ENCODE measurements at regions of chr11 and their contacts with region 1.

Region 1: DNA sequence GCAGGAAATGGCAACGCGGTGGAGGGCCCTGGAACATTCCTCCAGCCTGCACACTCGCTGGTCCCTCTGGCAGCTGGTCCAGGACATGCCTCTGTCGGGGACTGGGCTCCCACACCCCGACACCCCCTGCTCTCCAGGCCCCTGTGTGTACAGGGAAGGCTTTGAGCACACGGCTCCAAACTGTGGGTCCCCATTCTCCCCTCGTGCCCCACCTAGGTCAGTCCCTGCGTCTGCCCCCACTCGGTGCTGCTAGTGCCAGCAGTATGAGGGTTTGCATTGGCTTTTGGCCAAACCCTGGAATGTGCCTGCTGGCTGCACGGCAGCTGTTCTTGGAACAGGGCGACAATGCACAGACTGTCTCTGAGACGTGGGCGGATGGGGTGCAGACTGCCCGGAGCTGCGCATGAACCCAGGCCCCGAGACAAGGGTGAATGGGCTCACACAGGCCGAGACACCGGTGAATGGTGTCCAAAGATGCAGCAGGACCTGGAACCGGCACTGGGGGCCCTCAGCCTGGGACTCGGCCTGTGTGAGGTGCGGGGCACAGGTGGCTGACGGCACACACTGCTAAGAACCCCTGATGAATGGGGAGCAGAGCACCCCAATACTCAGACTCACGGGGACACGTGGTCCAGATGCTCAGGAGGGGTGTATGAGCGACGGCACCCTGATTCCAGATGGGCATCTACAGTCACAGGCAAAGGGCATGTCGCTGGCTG is 7.5 kb upstream of the SYT8 start:
- DNase-seq: peak; percentile 52 to 96 (median 71)

Region 2: DNA sequence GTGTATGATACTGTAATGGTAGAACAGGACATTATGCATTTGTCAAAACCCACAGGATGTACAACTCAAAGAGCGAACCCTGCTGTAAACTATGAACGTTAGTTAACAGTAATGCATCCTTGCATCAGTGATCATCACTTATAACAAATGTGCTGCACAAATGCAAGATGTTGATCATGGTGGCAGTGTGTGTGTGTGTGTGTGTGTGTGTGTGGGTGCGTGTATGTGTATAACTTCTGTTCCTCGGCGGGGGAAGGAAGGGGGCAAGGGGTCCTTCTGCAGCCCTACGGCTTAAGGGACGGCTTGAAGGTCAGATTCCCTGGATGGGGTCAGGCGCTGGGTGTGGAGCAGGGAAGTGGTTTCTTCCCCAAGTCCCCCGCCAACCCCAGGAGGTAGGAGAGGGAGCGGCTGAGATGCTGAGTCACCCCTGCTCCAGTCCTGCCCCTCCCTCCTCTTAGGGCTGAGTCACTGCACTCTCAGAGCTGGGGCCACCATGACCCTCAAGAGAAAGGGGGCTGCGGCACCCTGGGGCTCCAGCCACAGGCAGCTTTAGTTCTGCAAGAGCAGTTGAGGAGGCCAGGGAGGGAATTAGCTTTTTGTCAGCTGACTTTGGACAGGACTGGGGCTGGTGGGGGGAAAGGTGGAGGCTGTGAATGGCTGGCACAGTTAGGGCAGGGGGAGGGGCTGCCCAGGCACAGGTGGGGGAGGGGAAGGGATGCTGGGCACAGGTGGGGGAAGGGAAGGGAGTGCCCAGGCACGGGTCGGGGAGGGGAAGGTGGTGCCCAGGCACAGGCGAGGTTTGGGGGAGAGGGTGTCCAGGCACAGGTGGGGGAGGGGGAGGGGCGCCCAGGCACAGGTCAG is 54.8 kb before region 1 on chr11:
- intact Hi-C with region 1: loop called (anchors 10 kb)
- DNase-seq: peak in 5 of 10 donors; percentile 43 to 93 (median 85)

Measured in posterior cingulate gyrus (tissue), 11 donors.